CD4-positive, alpha-beta memory T cell (primary cell): ENCODE measurements at regions of chr2 and their contacts with region 1.

Region 1: GRCh38 chr2:176126929-176127773 is 2.4 kb upstream of the HOXD8 start:
- DNase-seq: peak; percentile 56 to 64 (median 58)
- H3K4me3 ChIP-seq: no peak overlapping the region
- H3K4me3 Mint-ChIP-seq: peak overlapping the region in 2 of 8 donors; percentile 7 to 17
- H3K27ac ChIP-seq: no peak overlapping the region
- H3K27ac Mint-ChIP-seq: peak overlapping the region in 2 of 7 donors; percentile 31 to 89
- H3K4me1 ChIP-seq: peaks cover 38% of the 10 kb centered on the region
- H3K4me1 Mint-ChIP-seq: peaks cover 10 to 45% (median 27%) of the 10 kb centered on the region in 4 donors
- H3K27me3 ChIP-seq: peaks cover 78% of the 10 kb centered on the region
- H3K27me3 Mint-ChIP-seq: peaks cover 61 to 63% of the 10 kb centered on the region in 2 donors

Region 2: DNA sequence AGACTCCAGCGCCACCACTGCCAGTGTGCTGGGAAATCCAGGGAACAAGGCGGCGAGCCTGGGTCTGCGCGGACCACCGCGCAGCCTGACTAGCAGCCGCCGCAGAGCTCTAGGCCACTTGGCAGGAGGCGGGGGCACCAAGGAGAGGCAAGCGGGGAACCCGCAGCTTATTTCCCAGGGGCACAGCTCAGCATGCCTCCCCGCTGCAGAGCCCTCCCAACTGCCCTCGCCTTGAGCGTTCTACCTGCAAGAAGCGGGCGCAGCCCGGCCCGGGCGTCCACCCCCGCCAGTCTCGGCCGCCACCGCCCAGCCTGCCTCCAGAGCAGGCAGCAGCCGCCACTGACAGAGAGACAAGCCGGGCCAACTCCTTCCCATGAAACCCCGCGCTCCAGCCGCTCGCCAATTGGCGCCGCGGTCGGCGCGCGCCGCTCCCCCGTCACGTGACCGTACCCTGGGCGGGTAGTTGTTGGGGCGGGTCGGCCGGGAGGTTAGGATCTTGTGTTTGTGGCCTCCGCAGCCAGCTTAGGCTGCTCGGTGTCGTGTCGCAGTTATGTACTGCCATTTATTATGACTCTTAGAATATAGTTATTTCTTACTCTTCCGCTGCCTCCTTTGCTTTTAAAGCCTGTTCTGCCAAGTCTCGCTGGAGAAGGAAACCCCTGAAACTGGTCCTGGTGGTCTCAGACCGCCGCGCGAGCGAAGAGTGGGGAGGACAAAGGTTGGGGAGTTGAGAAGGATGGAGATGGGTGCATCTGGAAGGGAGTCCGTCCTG is 125.0 kb before region 1 on chr2 and contains the start of gene LNPK:
- CTCF ChIA-PET with region 1: no interaction called
- POLR2A ChIA-PET with region 1: no interaction called
- intact Hi-C with region 1: loop called (anchors 5 kb)
- DNase-seq: peak; percentile 88 to 95 (median 92)
- H3K4me3 ChIP-seq: peak within 1 kb of the TSS; percentile 76 to 77
- H3K4me3 Mint-ChIP-seq: peak within 1 kb of the TSS; percentile 81 to 94 (median 90)
- H3K27ac ChIP-seq: peak within 1 kb of the TSS; percentile 74
- H3K27ac Mint-ChIP-seq: peak within 1 kb of the TSS; percentile 61 to 98 (median 91)
- H3K4me1 ChIP-seq: peaks cover 16% of the 10 kb centered on the region
- H3K4me1 Mint-ChIP-seq: peaks cover 12 to 33% (median 17%) of the 10 kb centered on the region in 4 donors
- H3K27me3 ChIP-seq: no peaks in the 10 kb centered on the region
- H3K27me3 Mint-ChIP-seq: no peaks in the 10 kb centered on the region
- total RNA-seq, gene LNPK: 30.4 to 31.3 TPM

Region 3: DNA sequence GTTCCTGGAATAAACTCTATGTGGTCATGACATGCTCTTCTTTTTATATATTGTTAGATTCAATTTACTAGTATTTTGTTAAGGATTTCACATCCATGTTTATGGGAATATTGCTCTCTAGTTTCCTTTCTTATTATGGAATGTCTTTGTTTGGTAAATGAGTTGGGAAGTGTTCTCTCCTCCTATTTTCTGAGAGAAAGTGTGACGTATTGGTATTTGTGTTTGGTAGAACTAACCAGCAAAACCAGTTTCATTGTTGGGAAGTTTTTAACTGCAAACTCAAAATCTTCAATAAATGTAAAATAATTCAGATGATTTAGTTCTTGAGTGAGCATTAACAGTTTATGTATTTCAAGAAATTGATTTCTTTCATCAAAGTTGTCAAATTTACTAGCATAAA is 113.7 kb before region 1 on chr2:
- CTCF ChIA-PET with region 1: no interaction called
- POLR2A ChIA-PET with region 1: no interaction called
- intact Hi-C with region 1: no loop called
- DNase-seq: no peak
- H3K4me3 ChIP-seq: no peak overlapping the region
- H3K4me3 Mint-ChIP-seq: no peak overlapping the region
- H3K27ac ChIP-seq: no peak overlapping the region
- H3K27ac Mint-ChIP-seq: no peak overlapping the region
- H3K4me1 ChIP-seq: no peaks in the 10 kb centered on the region
- H3K4me1 Mint-ChIP-seq: no peaks in the 10 kb centered on the region
- H3K27me3 ChIP-seq: no peaks in the 10 kb centered on the region
- H3K27me3 Mint-ChIP-seq: peaks cover 8 to 14% of the 10 kb centered on the region in 2 donors

Region 4: DNA sequence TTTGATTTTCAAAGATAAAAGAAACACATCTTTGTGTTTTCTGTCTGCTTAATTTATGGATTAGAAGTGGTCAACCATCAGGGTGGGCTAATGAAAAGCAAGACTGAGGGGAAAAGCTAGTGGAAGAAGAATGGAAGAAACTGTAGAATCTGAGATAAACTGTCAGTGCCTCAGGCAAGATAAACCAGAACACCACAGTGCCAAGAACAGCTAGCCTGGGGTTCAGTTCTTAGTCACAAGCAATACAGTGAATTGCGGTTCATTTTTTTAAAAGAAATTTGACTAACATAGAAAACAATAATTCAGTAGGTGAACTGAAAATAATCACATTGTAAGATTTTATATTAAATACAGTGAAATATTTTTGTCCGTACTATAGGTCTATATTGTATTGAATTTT is 103.1 kb before region 1 on chr2:
- CTCF ChIA-PET with region 1: no interaction called
- POLR2A ChIA-PET with region 1: no interaction called
- intact Hi-C with region 1: no loop called
- DNase-seq: no peak
- H3K4me3 ChIP-seq: no peak overlapping the region
- H3K4me3 Mint-ChIP-seq: no peak overlapping the region
- H3K27ac ChIP-seq: no peak overlapping the region
- H3K27ac Mint-ChIP-seq: no peak overlapping the region
- H3K4me1 ChIP-seq: no peaks in the 10 kb centered on the region
- H3K4me1 Mint-ChIP-seq: no peaks in the 10 kb centered on the region
- H3K27me3 ChIP-seq: peaks cover 3% of the 10 kb centered on the region
- H3K27me3 Mint-ChIP-seq: peaks cover 18 to 38% of the 10 kb centered on the region in 2 donors

Region 5: GRCh38 chr2:176445956-176446355 is 318.8 kb after region 1 on chr2:
- CTCF ChIA-PET with region 1: interaction called, 127 read pairs
- POLR2A ChIA-PET with region 1: no interaction called
- intact Hi-C with region 1: no loop called
- DNase-seq: no peak
- H3K4me3 ChIP-seq: no peak overlapping the region
- H3K4me3 Mint-ChIP-seq: no peak overlapping the region
- H3K27ac ChIP-seq: no peak overlapping the region
- H3K27ac Mint-ChIP-seq: no peak overlapping the region
- H3K4me1 ChIP-seq: no peaks in the 10 kb centered on the region
- H3K4me1 Mint-ChIP-seq: peaks cover 0 to 8% (median under 1%) of the 10 kb centered on the region in 4 donors
- H3K27me3 ChIP-seq: no peaks in the 10 kb centered on the region
- H3K27me3 Mint-ChIP-seq: peaks cover 5 to 6% of the 10 kb centered on the region in 2 donors

Region 6: GRCh38 chr2:176534798-176535466 is 407.8 kb after region 1 on chr2:
- CTCF ChIA-PET with region 1: no interaction called
- POLR2A ChIA-PET with region 1: no interaction called
- intact Hi-C with region 1: no loop called
- DNase-seq: no peak
- H3K4me3 ChIP-seq: no peak overlapping the region
- H3K4me3 Mint-ChIP-seq: no peak overlapping the region
- H3K27ac ChIP-seq: no peak overlapping the region
- H3K27ac Mint-ChIP-seq: no peak overlapping the region
- H3K4me1 ChIP-seq: no peaks in the 10 kb centered on the region
- H3K4me1 Mint-ChIP-seq: no peaks in the 10 kb centered on the region
- H3K27me3 ChIP-seq: no peaks in the 10 kb centered on the region
- H3K27me3 Mint-ChIP-seq: peaks cover 8 to 13% of the 10 kb centered on the region in 2 donors

Region 7: GRCh38 chr2:176554101-176555048 is 427.2 kb after region 1 on chr2:
- CTCF ChIA-PET with region 1: interaction called, 31 read pairs
- POLR2A ChIA-PET with region 1: no interaction called
- intact Hi-C with region 1: loop called (anchors 1 kb)
- DNase-seq: peak in 4 of 5 donors; percentile 42 to 48 (median 45)
- H3K4me3 ChIP-seq: peak overlapping the region; percentile 21 to 33
- H3K4me3 Mint-ChIP-seq: peak overlapping the region; percentile 82 to 94 (median 88)
- H3K27ac ChIP-seq: no peak overlapping the region
- H3K27ac Mint-ChIP-seq: no peak overlapping the region
- H3K4me1 ChIP-seq: peaks cover 10% of the 10 kb centered on the region
- H3K4me1 Mint-ChIP-seq: peaks cover 6 to 13% (median 10%) of the 10 kb centered on the region in 4 donors
- H3K27me3 ChIP-seq: peaks cover 3% of the 10 kb centered on the region
- H3K27me3 Mint-ChIP-seq: peaks cover 20 to 28% of the 10 kb centered on the region in 2 donors

Region 8: DNA sequence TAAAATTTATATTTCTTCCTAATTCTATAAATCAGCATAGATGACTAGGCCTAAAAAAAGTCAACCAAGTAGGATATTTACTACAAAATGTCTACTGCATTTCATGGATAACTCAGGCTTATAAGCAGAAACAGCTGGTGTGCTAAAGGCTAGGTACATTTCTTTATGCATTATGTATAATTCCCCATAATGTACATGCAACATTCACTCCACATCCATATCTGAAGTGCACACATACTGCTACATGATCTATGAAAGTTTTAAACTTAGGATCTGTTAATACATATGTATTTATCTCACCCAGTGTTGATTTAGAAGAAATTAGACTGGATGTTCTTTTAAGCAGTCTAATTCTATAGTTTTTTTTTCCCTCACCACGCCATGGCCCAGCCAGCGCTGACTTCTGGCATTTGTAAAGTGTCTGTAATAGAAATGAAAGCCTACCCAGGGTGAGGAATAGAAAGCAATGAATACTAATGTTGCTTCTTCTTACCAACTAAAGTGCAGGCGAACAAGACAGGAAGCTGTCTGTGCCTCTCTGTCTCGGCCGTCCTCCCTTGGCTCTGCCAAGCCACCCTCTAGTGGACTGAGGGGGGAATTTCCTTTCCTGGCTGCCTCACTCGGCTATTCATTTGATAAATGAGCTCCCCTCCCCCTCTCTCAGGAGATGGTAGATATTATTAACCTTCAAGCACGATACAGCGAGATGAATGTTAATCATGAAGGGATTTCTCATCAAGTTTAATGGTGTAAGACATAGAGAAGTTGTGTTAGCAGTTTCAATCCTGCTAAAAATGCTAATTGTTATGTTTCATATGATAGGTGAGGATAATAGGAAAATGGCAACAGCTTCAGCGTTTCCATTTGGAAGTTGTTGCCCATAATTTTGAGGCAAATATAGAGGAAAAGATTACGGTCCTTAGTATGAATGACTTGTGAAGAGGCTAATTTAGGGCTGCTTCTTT is 526.6 kb after region 1 on chr2:
- CTCF ChIA-PET with region 1: interaction called, 72 read pairs
- POLR2A ChIA-PET with region 1: no interaction called
- intact Hi-C with region 1: loop called (anchors 1 kb)
- DNase-seq: peak in 2 of 5 donors; percentile 6
- H3K4me3 ChIP-seq: no peak overlapping the region
- H3K4me3 Mint-ChIP-seq: no peak overlapping the region
- H3K27ac ChIP-seq: no peak overlapping the region
- H3K27ac Mint-ChIP-seq: no peak overlapping the region
- H3K4me1 ChIP-seq: no peaks in the 10 kb centered on the region
- H3K4me1 Mint-ChIP-seq: peaks cover 0 to 6% (median 5%) of the 10 kb centered on the region in 4 donors
- H3K27me3 ChIP-seq: no peaks in the 10 kb centered on the region
- H3K27me3 Mint-ChIP-seq: peaks cover 23 to 34% of the 10 kb centered on the region in 2 donors